ENCODE measurements at regions of chr1 and their contacts with region 1.

Region 1: GRCh38 chr1:155609515-155610256 is at the start of gene MSTO1:
- DNase-seq: peak; percentile 98
- ATAC-seq: peak; percentile 97
- H3K4me3 ChIP-seq: peak within 1 kb of the TSS; percentile 43 to 90
- H3K27ac ChIP-seq: peak within 1 kb of the TSS in 1 of 2 donors; percentile 2
- H3K4me1 ChIP-seq: no peaks in the 10 kb centered on the region
- H3K27me3 ChIP-seq: no peaks in the 10 kb centered on the region
- total RNA-seq, gene MSTO1: 44.2 to 46.5 TPM

Region 2: DNA sequence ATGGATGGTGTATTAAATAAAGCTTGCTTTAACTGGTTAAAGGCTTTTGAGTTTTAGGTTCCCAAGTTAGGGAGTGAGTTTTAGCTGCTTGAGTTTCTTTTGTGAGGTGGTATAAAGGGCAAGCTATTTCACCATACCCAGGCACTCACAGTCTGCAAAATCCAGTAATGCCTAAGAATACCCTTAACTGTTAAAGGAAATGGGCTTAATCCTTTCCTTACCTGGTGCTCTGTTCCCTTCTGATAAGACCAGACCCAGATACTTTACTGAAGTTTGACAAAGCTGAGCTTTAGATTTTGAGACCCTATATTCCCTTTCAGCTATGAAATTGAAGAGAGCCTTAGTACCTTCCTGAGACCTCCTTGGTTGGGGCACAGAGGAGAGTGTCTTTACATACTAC is 30.7 kb after region 1 on chr1:
- intact Hi-C with region 1: loop called in 1 of 2 experiments (anchors 5 kb)
- DNase-seq: no peak
- ATAC-seq: no peak
- H3K4me3 ChIP-seq: no peak overlapping the region
- H3K27ac ChIP-seq: no peak overlapping the region
- H3K4me1 ChIP-seq: no peaks in the 10 kb centered on the region
- H3K27me3 ChIP-seq: no peaks in the 10 kb centered on the region

Region 3: GRCh38 chr1:155669233-155670162 is 59.8 kb after region 1 on chr1:
- intact Hi-C with region 1: no loop called
- DNase-seq: no peak
- ATAC-seq: no peak
- H3K4me3 ChIP-seq: no peak overlapping the region
- H3K27ac ChIP-seq: no peak overlapping the region
- H3K4me1 ChIP-seq: no peaks in the 10 kb centered on the region
- H3K27me3 ChIP-seq: no peaks in the 10 kb centered on the region

Region 4: GRCh38 chr1:155717041-155717440 is 107.4 kb after region 1 on chr1:
- intact Hi-C with region 1: no loop called
- DNase-seq: no peak
- ATAC-seq: no peak
- H3K4me3 ChIP-seq: no peak overlapping the region
- H3K27ac ChIP-seq: no peak overlapping the region
- H3K4me1 ChIP-seq: no peaks in the 10 kb centered on the region
- H3K27me3 ChIP-seq: no peaks in the 10 kb centered on the region